Gastrocnemius medialis (tissue), 4 donors: ENCODE measurements at regions of chr6 and their contacts with region 1.

Region 1: GRCh38 chr6:134152767-134153485 is 100.5 kb upstream of the SLC2A12 start:
- DNase-seq: no peak
- ATAC-seq: no peak
- H3K4me3 ChIP-seq: no peak overlapping the region
- H3K27ac ChIP-seq: no peak overlapping the region
- H3K4me1 ChIP-seq: peaks cover 7 to 12% of the 10 kb centered on the region in 2 donors
- H3K27me3 ChIP-seq: no peaks in the 10 kb centered on the region
- CTCF ChIP-seq: no peak
- POLR2A ChIP-seq: no peak

Region 2: DNA sequence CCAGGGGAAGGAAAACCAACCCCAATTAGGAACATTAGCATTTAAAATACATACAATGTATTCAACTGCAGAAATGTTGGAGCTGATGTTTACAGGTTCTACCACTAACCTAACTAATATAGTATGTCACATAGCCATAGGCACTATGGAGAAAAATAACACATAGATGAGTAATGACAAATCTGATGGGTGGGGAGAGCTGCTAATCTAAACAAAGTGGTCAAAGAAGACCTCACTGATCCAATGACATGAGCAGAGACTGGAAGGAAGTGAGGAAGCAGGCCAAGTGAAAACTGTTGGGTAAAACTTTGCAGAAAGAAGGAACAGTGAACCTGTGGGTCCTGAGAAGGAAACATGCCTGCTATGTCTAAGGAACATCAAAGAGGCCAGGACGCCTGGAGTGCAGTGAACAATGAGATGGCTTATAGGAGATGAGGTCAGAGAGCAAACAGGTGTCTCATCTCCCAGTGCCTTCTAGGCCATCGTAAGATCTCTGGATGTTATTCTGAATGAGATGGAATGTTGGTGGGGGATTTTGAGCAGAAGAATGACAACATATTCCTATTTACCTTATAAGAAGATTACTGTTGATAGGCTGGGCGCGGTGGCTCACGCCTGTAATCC is 661.3 kb after region 1 on chr6:
- in situ Hi-C with region 1: loop called in 2 of 4 experiments (anchors 10 kb)
- intact Hi-C with region 1: no loop called
- DNase-seq: no peak
- ATAC-seq: no peak
- H3K4me3 ChIP-seq: no peak overlapping the region
- H3K27ac ChIP-seq: no peak overlapping the region
- H3K4me1 ChIP-seq: no peaks in the 10 kb centered on the region
- H3K27me3 ChIP-seq: no peaks in the 10 kb centered on the region
- CTCF ChIP-seq: no peak
- POLR2A ChIP-seq: no peak

Region 3: GRCh38 chr6:134949927-134950326 is 797.0 kb after region 1 on chr6 and contains the start of gene ALDH8A1:
- in situ Hi-C with region 1: loop called in 1 of 4 experiments (anchors 10 kb)
- intact Hi-C with region 1: no loop called
- DNase-seq: no peak
- ATAC-seq: no peak
- H3K4me3 ChIP-seq: no peak within 1 kb of the TSS
- H3K27ac ChIP-seq: no peak within 1 kb of the TSS
- H3K4me1 ChIP-seq: no peaks in the 10 kb centered on the region
- H3K27me3 ChIP-seq: no peaks in the 10 kb centered on the region
- CTCF ChIP-seq: no peak
- POLR2A ChIP-seq: no peak
- total RNA-seq, gene ALDH8A1: 0.55 to 2.1 (median 0.58) TPM in 3 of 4 donors, not detected in the other